Endothelial cell of umbilical vein (primary cell): ENCODE measurements at regions of chr17 and their contacts with region 1.

Region 1: GRCh38 chr17:63032142-63032541 is 66.1 kb downstream of the TANC2 start:
- DNase-seq: no peak
- H3K4me3 ChIP-seq: no peak overlapping the region
- H3K27ac ChIP-seq: no peak overlapping the region
- H3K4me1 ChIP-seq: peaks cover 2% of the 10 kb centered on the region
- H3K27me3 ChIP-seq: no peaks in the 10 kb centered on the region
- CTCF ChIP-seq: no peak
- POLR2A ChIP-seq: no peak

Region 2: GRCh38 chr17:62935098-62935497 is 97.0 kb before region 1 on chr17:
- CTCF ChIA-PET with region 1: no interaction called
- POLR2A ChIA-PET with region 1: no interaction called
- dilution Hi-C with region 1: no loop called
- intact Hi-C with region 1: no loop called
- DNase-seq: no peak
- H3K4me3 ChIP-seq: no peak overlapping the region
- H3K27ac ChIP-seq: no peak overlapping the region
- H3K4me1 ChIP-seq: no peaks in the 10 kb centered on the region
- H3K27me3 ChIP-seq: peaks cover 5 to 7% of the 10 kb centered on the region in 2 experiments
- CTCF ChIP-seq: no peak
- POLR2A ChIP-seq: no peak

Region 3: DNA sequence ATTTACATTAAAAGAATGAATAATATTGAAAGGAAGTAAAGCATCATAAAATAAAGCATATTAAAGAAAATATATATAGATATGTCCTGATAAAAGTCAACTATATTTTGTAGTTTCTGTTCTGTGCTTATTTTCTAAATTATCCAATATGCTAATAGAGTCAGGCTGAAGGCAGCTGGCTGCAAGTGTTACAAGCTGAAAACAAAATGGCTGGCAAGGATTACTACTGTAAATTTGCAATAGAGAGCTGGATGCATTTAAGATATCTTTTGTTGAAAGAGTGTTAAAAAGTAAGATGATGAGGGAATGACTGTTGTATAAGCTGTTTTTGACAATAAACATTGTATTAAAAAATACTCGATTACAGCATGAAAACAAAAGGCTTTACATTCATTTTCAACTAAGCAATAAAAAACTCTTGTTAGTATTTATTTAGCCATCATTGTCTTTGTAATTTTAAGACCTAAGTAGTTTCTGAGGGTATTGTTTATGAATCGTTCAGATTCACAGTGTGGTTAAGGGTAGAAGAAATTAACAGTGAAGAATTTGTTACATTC is 10.2 kb after region 1 on chr17:
- CTCF ChIA-PET with region 1: interaction called, 15 read pairs
- POLR2A ChIA-PET with region 1: no interaction called
- dilution Hi-C with region 1: no loop called
- intact Hi-C with region 1: no loop called
- DNase-seq: no peak
- H3K4me3 ChIP-seq: no peak overlapping the region
- H3K27ac ChIP-seq: no peak overlapping the region
- H3K4me1 ChIP-seq: peaks cover 6% of the 10 kb centered on the region
- H3K27me3 ChIP-seq: no peaks in the 10 kb centered on the region
- CTCF ChIP-seq: no peak
- POLR2A ChIP-seq: no peak